ENCODE measurements at regions of chr3 and their contacts with region 1.

Region 1: GRCh38 chr3:12984023-12984823 is 89.0 kb downstream of the IQSEC1 start:
- DNase-seq: peak; percentile 68 to 78
- H3K4me3 ChIP-seq: no peak overlapping the region
- H3K4me3 Mint-ChIP-seq: no peak overlapping the region
- H3K27ac Mint-ChIP-seq: no peak overlapping the region
- H3K4me1 ChIP-seq: peaks cover 8% of the 10 kb centered on the region; the same call in 1 of the 2 replicates
- H3K4me1 Mint-ChIP-seq: peaks cover 6% of the 10 kb centered on the region
- H3K27me3 ChIP-seq: no peaks in the 10 kb centered on the region
- H3K27me3 Mint-ChIP-seq: no peaks in the 10 kb centered on the region
- CTCF ChIP-seq: peak; percentile 43 to 82

Region 2: DNA sequence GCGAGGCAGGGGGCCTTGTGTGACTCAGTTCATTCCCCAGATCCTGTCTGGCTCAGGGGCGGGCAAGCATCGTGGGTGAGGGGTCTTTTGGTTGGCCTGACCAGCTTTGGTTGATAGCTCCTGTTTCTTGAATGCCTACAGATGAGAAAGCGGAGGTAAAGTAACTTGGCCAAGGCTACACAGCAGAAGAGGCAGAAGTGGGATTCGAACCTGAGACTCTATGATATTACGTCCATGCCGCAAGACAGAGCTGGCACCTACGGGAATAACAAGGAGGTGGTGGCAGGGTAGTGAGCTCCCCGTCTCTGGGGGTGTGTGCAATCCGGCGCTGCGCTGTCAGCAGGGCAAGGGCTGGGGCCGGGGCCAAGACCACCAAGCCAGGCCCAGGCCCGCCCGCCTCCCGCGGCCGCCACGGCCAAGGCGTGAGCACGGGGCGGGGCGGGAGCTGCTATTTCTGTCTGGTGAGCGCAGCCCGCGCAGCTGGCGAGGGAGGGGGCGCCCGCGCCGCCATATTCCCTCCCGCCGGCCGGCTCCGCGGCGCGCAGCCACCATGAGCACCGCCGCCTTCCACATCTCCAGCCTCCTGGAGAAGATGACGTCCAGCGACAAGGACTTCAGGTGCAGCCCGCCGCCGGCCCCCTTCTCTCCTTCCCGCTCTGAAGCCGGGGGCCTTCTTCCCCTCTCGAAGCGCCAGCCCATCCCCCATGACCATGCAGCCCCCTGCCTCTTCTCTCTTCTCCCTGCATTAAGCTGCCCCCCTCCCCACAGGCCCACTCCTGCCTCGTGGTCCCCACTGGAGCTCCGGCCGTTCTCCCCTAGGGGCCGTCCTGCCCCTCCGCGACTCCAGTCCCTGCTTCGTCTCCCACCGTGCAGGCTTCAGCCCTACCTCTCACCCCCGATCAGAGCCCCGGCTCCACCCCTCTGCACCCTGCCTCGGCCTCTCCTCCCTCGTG is 187.8 kb before region 1 on chr3 and contains the start of gene CAND2:
- CTCF ChIA-PET with region 1: no interaction called
- POLR2A ChIA-PET with region 1: no interaction called
- intact Hi-C with region 1: no loop called
- DNase-seq: no peak
- H3K4me3 ChIP-seq: no peak within 1 kb of the TSS
- H3K4me3 Mint-ChIP-seq: no peak within 1 kb of the TSS
- H3K27ac Mint-ChIP-seq: no peak within 1 kb of the TSS
- H3K4me1 ChIP-seq: no peaks in the 10 kb centered on the region
- H3K4me1 Mint-ChIP-seq: no peaks in the 10 kb centered on the region
- H3K27me3 ChIP-seq: no peaks in the 10 kb centered on the region
- H3K27me3 Mint-ChIP-seq: peaks cover 2% of the 10 kb centered on the region
- CTCF ChIP-seq: no peak
- total RNA-seq, gene CAND2: not detected in 2 replicates

Region 3: GRCh38 chr3:12868039-12869034 is 115.9 kb before region 1 on chr3:
- CTCF ChIA-PET with region 1: interaction called, 5 read pairs
- POLR2A ChIA-PET with region 1: no interaction called
- intact Hi-C with region 1: loop called (anchors 1 kb)
- DNase-seq: peak; percentile 84 to 85
- H3K4me3 ChIP-seq: no peak overlapping the region
- H3K4me3 Mint-ChIP-seq: peak overlapping the region; percentile 51
- H3K27ac Mint-ChIP-seq: no peak overlapping the region
- H3K4me1 ChIP-seq: peaks cover 5% of the 10 kb centered on the region; the same call in 1 of the 2 replicates
- H3K4me1 Mint-ChIP-seq: peaks cover 8% of the 10 kb centered on the region
- H3K27me3 ChIP-seq: no peaks in the 10 kb centered on the region
- H3K27me3 Mint-ChIP-seq: no peaks in the 10 kb centered on the region
- CTCF ChIP-seq: peak; percentile 83 to 95

Region 4: GRCh38 chr3:12891985-12892839 is 92.0 kb before region 1 on chr3:
- CTCF ChIA-PET with region 1: no interaction called
- POLR2A ChIA-PET with region 1: no interaction called
- intact Hi-C with region 1: loop called (anchors 5 kb)
- DNase-seq: peak in 1 of 2 experiments; percentile 55
- H3K4me3 ChIP-seq: no peak overlapping the region
- H3K4me3 Mint-ChIP-seq: no peak overlapping the region
- H3K27ac Mint-ChIP-seq: no peak overlapping the region
- H3K4me1 ChIP-seq: peaks cover 14% of the 10 kb centered on the region
- H3K4me1 Mint-ChIP-seq: peaks cover 23% of the 10 kb centered on the region
- H3K27me3 ChIP-seq: no peaks in the 10 kb centered on the region
- H3K27me3 Mint-ChIP-seq: peaks cover 7% of the 10 kb centered on the region
- CTCF ChIP-seq: peak; percentile 82 to 85

Region 5: GRCh38 chr3:12922306-12922705 is 61.9 kb before region 1 on chr3:
- CTCF ChIA-PET with region 1: no interaction called
- POLR2A ChIA-PET with region 1: no interaction called
- intact Hi-C with region 1: loop called (anchors 5 kb)
- DNase-seq: no peak
- H3K4me3 ChIP-seq: no peak overlapping the region
- H3K4me3 Mint-ChIP-seq: no peak overlapping the region
- H3K27ac Mint-ChIP-seq: no peak overlapping the region
- H3K4me1 ChIP-seq: no peaks in the 10 kb centered on the region
- H3K4me1 Mint-ChIP-seq: no peaks in the 10 kb centered on the region
- H3K27me3 ChIP-seq: no peaks in the 10 kb centered on the region
- H3K27me3 Mint-ChIP-seq: no peaks in the 10 kb centered on the region
- CTCF ChIP-seq: no peak

Region 6: DNA sequence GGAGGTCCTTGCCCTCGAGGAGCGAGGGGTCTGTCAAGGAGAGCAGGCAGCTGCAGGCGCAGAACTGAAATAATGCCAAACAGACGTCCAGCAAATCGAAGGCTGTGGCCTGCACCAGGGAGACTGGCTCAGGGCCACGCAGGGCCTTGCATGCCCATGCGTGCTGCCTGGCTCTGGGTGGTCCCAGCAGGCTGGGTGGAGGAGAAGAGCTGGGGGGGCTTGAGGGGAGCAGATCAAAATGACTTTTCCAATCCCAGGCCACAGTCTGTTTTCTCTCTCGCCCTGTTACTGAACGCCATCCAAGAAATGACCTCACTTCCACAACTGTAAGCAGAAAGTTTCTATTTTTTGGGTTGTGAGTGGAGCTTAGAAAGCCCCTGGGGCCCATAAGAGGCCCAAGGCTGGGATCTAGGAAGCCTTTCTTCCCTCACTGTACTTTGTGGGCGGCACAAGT is 45.9 kb before region 1 on chr3:
- CTCF ChIA-PET with region 1: no interaction called
- POLR2A ChIA-PET with region 1: no interaction called
- intact Hi-C with region 1: no loop called
- DNase-seq: no peak
- H3K4me3 ChIP-seq: no peak overlapping the region
- H3K4me3 Mint-ChIP-seq: no peak overlapping the region
- H3K27ac Mint-ChIP-seq: no peak overlapping the region
- H3K4me1 ChIP-seq: no peaks in the 10 kb centered on the region
- H3K4me1 Mint-ChIP-seq: no peaks in the 10 kb centered on the region
- H3K27me3 ChIP-seq: no peaks in the 10 kb centered on the region
- H3K27me3 Mint-ChIP-seq: no peaks in the 10 kb centered on the region
- CTCF ChIP-seq: no peak

Region 7: GRCh38 chr3:12948891-12949711 is 35.1 kb before region 1 on chr3:
- CTCF ChIA-PET with region 1: interaction called, 6 read pairs
- POLR2A ChIA-PET with region 1: no interaction called
- intact Hi-C with region 1: loop called (anchors 5 kb)
- DNase-seq: no peak
- H3K4me3 ChIP-seq: no peak overlapping the region
- H3K4me3 Mint-ChIP-seq: no peak overlapping the region
- H3K27ac Mint-ChIP-seq: no peak overlapping the region
- H3K4me1 ChIP-seq: no peaks in the 10 kb centered on the region
- H3K4me1 Mint-ChIP-seq: no peaks in the 10 kb centered on the region
- H3K27me3 ChIP-seq: no peaks in the 10 kb centered on the region
- H3K27me3 Mint-ChIP-seq: no peaks in the 10 kb centered on the region
- CTCF ChIP-seq: no peak

Region 8: DNA sequence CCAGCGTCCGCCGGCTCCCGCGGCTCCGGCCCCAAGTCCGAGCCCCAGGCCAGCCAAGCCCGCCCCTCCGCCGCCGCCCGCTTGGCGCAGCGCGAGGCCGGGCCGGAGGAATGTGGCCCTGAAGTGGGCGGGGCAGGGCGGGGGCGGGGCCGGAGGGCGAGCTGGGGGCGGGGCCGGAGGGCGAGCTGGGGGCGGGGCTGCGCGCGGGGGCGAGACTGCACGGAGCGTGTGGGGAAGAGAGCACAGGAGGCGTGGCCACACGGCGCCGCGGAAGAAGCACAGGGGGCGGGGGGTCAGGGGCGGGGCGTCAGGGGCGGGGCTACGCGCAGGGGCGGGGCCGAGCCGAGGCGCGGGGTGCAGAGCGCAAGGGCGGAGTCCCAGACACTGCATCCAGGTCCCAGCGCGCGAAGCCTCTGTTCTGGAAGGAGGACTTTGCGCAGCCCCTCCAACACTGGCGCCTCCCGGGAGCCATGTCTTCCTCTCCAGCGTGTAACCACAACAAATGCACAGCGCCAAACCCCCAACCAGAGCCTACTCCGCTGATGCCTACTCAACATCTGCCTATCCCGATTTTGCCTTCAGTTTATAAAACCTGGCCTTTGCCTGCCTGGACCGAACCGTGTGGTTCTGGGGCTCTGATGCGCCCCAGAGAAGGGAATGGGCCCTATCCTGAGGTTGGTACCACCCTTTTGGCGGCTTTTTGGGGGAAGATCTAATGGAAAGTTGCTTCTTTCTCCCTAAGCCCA is 16.4 kb before region 1 on chr3:
- CTCF ChIA-PET with region 1: interaction called, 15 read pairs
- POLR2A ChIA-PET with region 1: no interaction called
- intact Hi-C with region 1: loop called (anchors 1 kb)
- DNase-seq: peak; percentile 88
- H3K4me3 ChIP-seq: peak overlapping the region; percentile 85
- H3K4me3 Mint-ChIP-seq: peak overlapping the region; percentile 95
- H3K27ac Mint-ChIP-seq: no peak overlapping the region
- H3K4me1 ChIP-seq: peaks cover 34% of the 10 kb centered on the region
- H3K4me1 Mint-ChIP-seq: peaks cover 34% of the 10 kb centered on the region
- H3K27me3 ChIP-seq: no peaks in the 10 kb centered on the region
- H3K27me3 Mint-ChIP-seq: no peaks in the 10 kb centered on the region
- CTCF ChIP-seq: no peak

Region 9: DNA sequence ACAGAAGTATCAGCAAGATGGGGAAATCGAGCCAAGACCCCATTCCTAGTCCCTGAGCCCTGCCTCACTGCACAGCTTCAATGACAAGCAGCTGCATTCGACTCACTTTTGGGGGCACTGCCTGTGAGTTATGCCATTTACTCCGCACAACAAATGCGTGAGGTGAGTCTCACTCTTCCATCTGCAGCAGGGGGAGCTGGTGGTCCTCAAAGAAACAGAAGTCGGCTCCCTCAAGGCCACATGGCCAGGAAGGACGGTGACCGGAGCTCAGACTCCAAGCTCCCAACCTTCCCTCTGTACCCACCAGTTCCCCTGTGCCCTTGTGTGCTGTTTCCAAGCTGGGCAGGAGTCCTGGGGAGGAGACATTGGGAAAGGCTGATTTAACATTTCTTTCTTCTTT is 216.7 kb after region 1 on chr3:
- CTCF ChIA-PET with region 1: no interaction called
- POLR2A ChIA-PET with region 1: no interaction called
- intact Hi-C with region 1: no loop called
- DNase-seq: peak in 1 of 2 experiments; percentile 12
- H3K4me3 ChIP-seq: no peak overlapping the region
- H3K4me3 Mint-ChIP-seq: no peak overlapping the region
- H3K27ac Mint-ChIP-seq: no peak overlapping the region
- H3K4me1 ChIP-seq: no peaks in the 10 kb centered on the region
- H3K4me1 Mint-ChIP-seq: no peaks in the 10 kb centered on the region
- H3K27me3 ChIP-seq: peaks cover 2% of the 10 kb centered on the region; the same call in 1 of the 2 replicates
- H3K27me3 Mint-ChIP-seq: peaks cover 36% of the 10 kb centered on the region
- CTCF ChIP-seq: peak in 1 of 2 experiments; percentile 25